SK-N-SH (cell line): ENCODE measurements at regions of chr19 and their contacts with region 1.

Region 1: DNA sequence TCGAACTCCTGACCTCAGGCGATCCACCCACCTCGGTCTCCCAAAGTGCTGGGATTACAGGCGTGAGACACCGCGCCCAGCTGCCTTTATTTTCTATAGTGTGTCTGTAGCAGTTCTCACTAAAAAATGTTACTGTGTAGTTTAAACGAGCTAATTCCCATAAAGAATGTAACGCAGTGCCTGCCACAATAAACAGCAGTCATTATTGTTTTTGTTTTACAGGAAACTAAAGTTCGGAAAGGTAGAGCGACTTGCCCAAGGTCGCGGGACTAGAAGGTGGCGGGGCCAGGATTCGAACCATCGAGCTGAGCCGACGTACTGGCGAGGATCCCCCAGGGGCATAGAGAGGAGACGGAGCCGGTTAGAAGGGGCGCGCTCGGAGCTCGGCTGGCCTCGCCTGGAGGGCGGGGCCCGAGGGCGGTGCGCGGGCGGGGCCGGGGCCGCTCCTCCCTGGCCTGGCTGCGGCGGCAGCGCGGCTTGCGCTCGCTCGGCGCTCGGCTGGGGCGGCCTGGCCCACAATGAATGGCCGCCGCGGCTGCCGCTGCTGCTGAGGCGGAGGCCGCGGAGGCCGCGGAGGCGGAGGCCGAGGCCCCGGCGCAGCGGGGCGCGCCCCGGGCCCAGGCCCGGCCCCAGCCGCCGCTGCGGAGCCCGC is at the start of gene NACC1:
- DNase-seq: peak; percentile 99
- H3K4me3 ChIP-seq: peak within 1 kb of the TSS; percentile 97 to 98
- H3K27ac ChIP-seq: peak within 1 kb of the TSS; percentile 65 to 85
- H3K4me1 ChIP-seq: peaks cover 22 to 27% of the 10 kb centered on the region in 2 experiments; a peak in 2 of 4 replicates
- H3K27me3 ChIP-seq: no peaks in the 10 kb centered on the region
- CTCF ChIP-seq: no peak
- EP300 ChIP-seq: no peak
- RAD21 ChIP-seq: no peak
- polyA plus RNA-seq, gene NACC1: 72.8 and 127 TPM in 2 replicates

Region 2: DNA sequence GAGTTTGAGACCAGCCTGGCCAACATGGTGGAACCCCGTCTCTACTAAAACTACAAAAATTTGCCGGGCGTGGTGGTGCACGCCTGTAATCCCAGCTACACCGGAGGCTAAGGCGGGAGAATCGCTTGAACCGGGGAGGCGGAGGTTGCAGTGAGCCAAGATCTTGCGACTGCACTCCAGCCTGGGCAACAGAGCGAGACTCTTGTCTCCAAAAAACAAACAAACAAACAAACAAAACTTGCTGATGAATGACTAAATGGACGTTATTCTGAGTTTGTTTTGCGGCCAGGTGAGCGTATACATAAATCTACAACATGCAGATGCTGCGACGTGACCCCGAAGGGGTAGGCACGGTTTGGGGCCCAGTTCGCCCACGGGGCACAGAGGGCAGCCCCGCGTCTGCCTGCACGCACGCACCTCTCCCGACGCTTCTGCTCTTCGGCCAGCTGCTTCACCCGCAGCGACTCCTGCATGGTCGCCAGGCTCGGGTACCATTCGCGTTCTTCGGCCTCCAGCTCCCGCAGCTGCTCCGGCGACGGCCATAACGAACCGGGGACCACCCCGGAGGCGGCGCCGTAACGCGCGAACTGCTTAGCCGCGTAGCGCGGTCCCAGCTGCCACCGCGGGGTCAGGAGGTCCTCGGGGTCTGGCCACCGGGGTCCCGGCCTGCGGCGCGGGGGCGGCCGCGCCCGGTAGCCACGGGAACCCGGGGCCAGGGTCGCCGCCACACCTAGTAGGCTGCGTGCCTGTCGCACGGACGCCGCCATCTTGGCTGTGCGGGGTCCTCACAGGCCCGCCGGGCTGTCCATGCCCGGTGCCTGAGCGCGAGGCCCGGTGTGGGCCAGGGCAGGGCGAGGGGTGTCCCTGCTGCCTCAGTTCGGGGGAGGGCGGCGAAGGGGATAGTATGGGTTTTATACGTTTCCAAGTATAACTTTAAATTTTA is 161.2 kb before region 1 on chr19 and contains the start of gene GADD45GIP1:
- CTCF ChIA-PET with region 1: no interaction called
- POLR2A ChIA-PET with region 1: no interaction called
- DNase-seq: peak; percentile 94
- H3K4me3 ChIP-seq: peak within 1 kb of the TSS; percentile 70 to 71
- H3K27ac ChIP-seq: peak within 1 kb of the TSS; percentile 73 to 97
- H3K4me1 ChIP-seq: peaks cover 30 to 37% of the 10 kb centered on the region in 2 experiments
- H3K27me3 ChIP-seq: no peaks in the 10 kb centered on the region
- CTCF ChIP-seq: no peak
- EP300 ChIP-seq: no peak
- RAD21 ChIP-seq: no peak
- polyA plus RNA-seq, gene GADD45GIP1: 65.7 and 91.8 TPM in 2 replicates

Region 3: GRCh38 chr19:13104360-13104847 is 13.5 kb before region 1 on chr19:
- CTCF ChIA-PET with region 1: interaction called, 10 read pairs
- POLR2A ChIA-PET with region 1: interaction called, 3 read pairs
- DNase-seq: peak; percentile 81
- H3K4me3 ChIP-seq: no peak overlapping the region
- H3K27ac ChIP-seq: no peak overlapping the region
- H3K4me1 ChIP-seq: peaks cover 0 to 24% of the 10 kb centered on the region in 2 experiments; a peak in 3 of 4 replicates
- H3K27me3 ChIP-seq: no peaks in the 10 kb centered on the region
- CTCF ChIP-seq: peak; percentile 54
- EP300 ChIP-seq: no peak
- RAD21 ChIP-seq: peak; percentile 32; the same call in 1 of the 2 replicates

Region 4: GRCh38 chr19:13150187-13150930 is 32.5 kb after region 1 on chr19 and contains the starts of genes IER2 and STX10:
- CTCF ChIA-PET with region 1: interaction called, 10 read pairs
- POLR2A ChIA-PET with region 1: interaction called, 16 read pairs
- DNase-seq: peak; percentile 92
- H3K4me3 ChIP-seq: peak within 1 kb of the TSS; percentile 83 to 94
- H3K27ac ChIP-seq: peak within 1 kb of the TSS; percentile 95 to 99
- H3K4me1 ChIP-seq: peaks cover 0 to 12% of the 10 kb centered on the region in 2 experiments; a peak in 1 of 4 replicates
- H3K27me3 ChIP-seq: no peaks in the 10 kb centered on the region
- CTCF ChIP-seq: peak; percentile 53
- EP300 ChIP-seq: no peak
- RAD21 ChIP-seq: peak; percentile 53
- polyA plus RNA-seq, gene IER2: 55.7 and 115 TPM in 2 replicates
- polyA plus RNA-seq, gene STX10: 143 and 163 TPM in 2 replicates